ENCODE measurements at regions of chrX and their contacts with region 1.

Region 1: DNA sequence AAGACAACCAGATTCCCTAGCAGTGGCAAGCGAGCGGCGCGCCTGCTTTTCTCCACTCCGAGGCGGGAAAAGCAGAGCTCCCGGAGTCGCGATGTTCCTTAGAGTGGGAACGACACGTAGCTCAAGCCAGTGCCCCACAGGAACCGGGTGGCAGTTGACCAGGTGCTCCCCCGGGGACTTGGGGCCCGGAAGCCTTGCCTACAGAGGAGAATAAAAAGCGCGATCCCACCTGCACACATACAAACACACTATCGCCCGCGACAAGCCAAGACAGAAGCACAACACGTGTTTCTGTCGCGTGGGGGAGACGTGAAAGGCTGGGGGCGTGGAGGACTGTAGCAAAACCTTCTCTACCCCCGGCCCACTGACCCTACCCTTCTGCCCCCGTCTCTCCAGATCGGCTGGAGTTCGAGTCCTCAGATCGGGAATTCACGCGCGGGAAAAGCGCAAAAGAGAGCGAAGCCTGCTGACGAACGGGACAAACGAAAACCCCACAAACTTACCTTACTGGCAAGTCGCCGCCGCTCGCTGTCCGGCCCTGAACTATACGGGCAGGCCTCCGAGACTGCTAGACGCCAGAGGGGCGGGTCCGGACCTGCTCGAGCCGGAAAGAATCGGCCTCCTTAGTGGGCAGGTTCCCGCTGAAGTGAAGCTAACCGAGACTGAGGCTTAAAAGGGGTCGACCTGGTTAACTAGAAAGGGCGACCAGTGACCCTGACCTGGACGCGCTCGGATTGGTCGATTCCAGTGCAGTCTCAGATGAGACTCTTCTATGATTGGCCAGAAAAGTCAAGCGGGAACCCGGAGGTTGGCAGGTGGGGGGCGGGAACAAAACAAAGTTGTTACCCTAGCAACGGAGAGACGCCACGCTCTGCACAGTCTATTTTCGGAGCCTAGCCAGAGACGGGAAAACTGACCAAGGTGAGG is at the starts of genes DNAAF6 and NUP62CL:
- DNase-seq: peak; percentile 14
- H3K4me3 ChIP-seq: peak within 1 kb of the TSS; percentile 12 to 52 (median 26)
- H3K27ac ChIP-seq: no peak within 1 kb of the TSS
- H3K4me1 ChIP-seq: peaks cover 6% of the 10 kb centered on the region
- H3K27me3 ChIP-seq: no peaks in the 10 kb centered on the region
- CTCF ChIP-seq: no peak
- POLR2A ChIP-seq: no peak
- total RNA-seq, gene DNAAF6: not detected in 2 replicates
- total RNA-seq, gene NUP62CL: not detected in 2 replicates

Region 2: GRCh38 chrX:107118322-107119147 is 87.5 kb before region 1 on chrX and contains the start of gene RBM41:
- CTCF ChIA-PET with region 1: no interaction called
- POLR2A ChIA-PET with region 1: no interaction called
- dilution Hi-C with region 1: no loop called
- intact Hi-C with region 1: loop called (anchors 5 kb)
- DNase-seq: peak; percentile 83
- H3K4me3 ChIP-seq: peak within 1 kb of the TSS; percentile 82 to 92 (median 90)
- H3K27ac ChIP-seq: peak within 1 kb of the TSS; percentile 68
- H3K4me1 ChIP-seq: peaks cover 6% of the 10 kb centered on the region
- H3K27me3 ChIP-seq: no peaks in the 10 kb centered on the region
- CTCF ChIP-seq: no peak
- POLR2A ChIP-seq: no peak
- total RNA-seq, gene RBM41: 13.0 and 16.0 TPM in 2 replicates

Region 3: DNA sequence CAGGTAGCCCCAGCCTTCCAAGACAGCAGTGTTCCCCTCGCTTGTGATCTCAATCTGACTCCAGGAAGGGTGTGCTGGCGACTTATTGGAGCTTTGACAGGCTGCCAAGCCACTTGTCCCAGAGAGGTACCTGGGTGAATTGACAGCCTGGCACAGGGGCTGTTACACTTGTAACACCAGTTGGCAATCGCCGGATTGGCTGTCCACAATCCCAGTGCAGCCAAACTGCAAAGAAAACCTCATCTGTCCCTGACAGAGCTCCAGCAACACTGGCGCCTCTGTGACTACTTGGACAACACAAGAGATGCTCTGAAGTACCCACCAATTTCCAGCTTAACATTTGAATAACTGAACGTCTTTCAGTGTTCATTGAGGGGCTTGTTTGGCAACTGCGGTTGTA is 345.5 kb after region 1 on chrX:
- CTCF ChIA-PET with region 1: no interaction called
- POLR2A ChIA-PET with region 1: no interaction called
- dilution Hi-C with region 1: no loop called
- intact Hi-C with region 1: no loop called
- DNase-seq: no peak
- H3K4me3 ChIP-seq: no peak overlapping the region
- H3K27ac ChIP-seq: no peak overlapping the region
- H3K4me1 ChIP-seq: no peaks in the 10 kb centered on the region
- H3K27me3 ChIP-seq: peaks cover 0 to 1% of the 10 kb centered on the region in 2 experiments
- CTCF ChIP-seq: no peak
- POLR2A ChIP-seq: no peak

Measured in endothelial cell of umbilical vein (primary cell).